CD8-positive, alpha-beta T cell (primary cell): ENCODE measurements at regions of chr6 and their contacts with region 1.

Region 1: GRCh38 chr6:104754788-104755409 is 104.8 kb downstream of the HACE1 start:
- DNase-seq: peak in 1 of 9 experiments; percentile 5
- ATAC-seq: no peak
- H3K4me3 ChIP-seq: no peak overlapping the region
- H3K4me3 Mint-ChIP-seq: no peak overlapping the region
- H3K27ac ChIP-seq: no peak overlapping the region
- H3K27ac Mint-ChIP-seq: no peak overlapping the region
- H3K4me1 ChIP-seq: no peaks in the 10 kb centered on the region
- H3K4me1 Mint-ChIP-seq: no peaks in the 10 kb centered on the region
- H3K27me3 ChIP-seq: no peaks in the 10 kb centered on the region
- H3K27me3 Mint-ChIP-seq: no peaks in the 10 kb centered on the region
- CTCF ChIP-seq: no peak

Region 2: GRCh38 chr6:105651969-105652368 is 897.1 kb after region 1 on chr6:
- CTCF ChIA-PET with region 1: no interaction called
- POLR2A ChIA-PET with region 1: no interaction called
- intact Hi-C with region 1: loop called in 1 of 2 experiments (anchors 10 kb)
- DNase-seq: peak in 2 of 9 experiments; percentile 13 to 15
- ATAC-seq: no peak
- H3K4me3 ChIP-seq: no peak overlapping the region
- H3K4me3 Mint-ChIP-seq: no peak overlapping the region
- H3K27ac ChIP-seq: no peak overlapping the region
- H3K27ac Mint-ChIP-seq: no peak overlapping the region
- H3K4me1 ChIP-seq: peaks cover 23% of the 10 kb centered on the region
- H3K4me1 Mint-ChIP-seq: peaks cover 42% of the 10 kb centered on the region
- H3K27me3 ChIP-seq: no peaks in the 10 kb centered on the region
- H3K27me3 Mint-ChIP-seq: no peaks in the 10 kb centered on the region
- CTCF ChIP-seq: no peak